Activated B cell treated with CpG ODN at 0.5 μM for 24 hours (primary cell): ENCODE measurements at regions of chr10 and their contacts with region 1.

Region 1: DNA sequence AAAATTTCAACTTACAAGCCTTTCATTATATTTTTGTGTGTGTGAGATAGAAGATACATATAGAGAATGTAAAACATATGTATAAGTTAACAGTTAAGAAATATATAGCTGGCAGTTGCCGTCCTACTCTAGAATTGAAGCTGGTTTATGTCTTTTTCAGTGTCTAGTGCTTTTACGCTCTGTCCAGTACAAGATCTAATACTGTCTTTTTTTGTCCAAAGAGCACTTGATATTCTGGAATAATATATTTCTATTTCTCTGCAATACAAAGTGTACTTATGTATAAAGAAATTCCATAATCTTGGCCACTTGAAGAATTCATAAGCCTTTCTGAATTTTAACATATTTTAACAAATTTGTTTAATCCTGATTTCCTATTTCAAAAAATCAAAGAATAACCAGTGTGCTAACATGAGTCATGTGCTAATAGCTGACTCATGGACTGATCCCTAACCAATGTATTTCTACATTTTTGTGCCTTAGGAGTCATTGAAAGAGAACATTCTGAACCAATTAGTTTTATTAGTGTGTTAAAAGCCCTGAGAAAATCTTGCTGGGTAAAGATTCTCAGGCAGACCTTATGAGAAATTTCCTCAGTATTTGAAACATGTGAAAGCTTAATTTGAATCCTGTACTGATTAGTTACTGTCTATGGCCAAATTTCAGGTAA is 73.2 kb upstream of the CCAR1 start:
- DNase-seq: no peak
- ATAC-seq: no peak
- H3K4me3 Mint-ChIP-seq: no peak overlapping the region
- H3K27ac Mint-ChIP-seq: no peak overlapping the region
- H3K4me1 Mint-ChIP-seq: no peaks in the 10 kb centered on the region
- H3K27me3 Mint-ChIP-seq: no peaks in the 10 kb centered on the region
- CTCF ChIP-seq: no peak

Region 2: DNA sequence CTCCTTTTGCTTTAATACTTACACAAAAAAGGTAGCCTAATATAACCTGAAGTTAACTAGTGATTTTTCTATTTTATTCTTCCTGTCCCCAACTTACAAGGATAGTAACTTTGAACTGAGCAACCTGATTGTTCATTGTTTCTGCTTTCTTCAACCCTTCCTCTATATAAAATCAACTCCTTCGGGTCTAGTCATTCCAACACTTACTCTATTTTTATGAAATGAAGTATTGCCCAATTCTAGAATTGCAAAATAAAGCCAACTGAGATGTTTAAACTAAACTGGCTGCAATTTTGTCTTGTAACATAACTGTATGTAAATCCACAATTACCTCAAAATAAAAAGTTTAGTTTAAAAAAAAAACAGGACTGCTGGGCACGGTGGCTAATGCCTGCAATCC is 155.7 kb before region 1 on chr10:
- CTCF ChIA-PET with region 1: no interaction called
- POLR2A ChIA-PET with region 1: interaction called, 11 read pairs
- intact Hi-C with region 1: no loop called
- DNase-seq: no peak
- ATAC-seq: no peak
- H3K4me3 Mint-ChIP-seq: no peak overlapping the region
- H3K27ac Mint-ChIP-seq: no peak overlapping the region
- H3K4me1 Mint-ChIP-seq: no peaks in the 10 kb centered on the region
- H3K27me3 Mint-ChIP-seq: no peaks in the 10 kb centered on the region
- CTCF ChIP-seq: no peak

Region 3: DNA sequence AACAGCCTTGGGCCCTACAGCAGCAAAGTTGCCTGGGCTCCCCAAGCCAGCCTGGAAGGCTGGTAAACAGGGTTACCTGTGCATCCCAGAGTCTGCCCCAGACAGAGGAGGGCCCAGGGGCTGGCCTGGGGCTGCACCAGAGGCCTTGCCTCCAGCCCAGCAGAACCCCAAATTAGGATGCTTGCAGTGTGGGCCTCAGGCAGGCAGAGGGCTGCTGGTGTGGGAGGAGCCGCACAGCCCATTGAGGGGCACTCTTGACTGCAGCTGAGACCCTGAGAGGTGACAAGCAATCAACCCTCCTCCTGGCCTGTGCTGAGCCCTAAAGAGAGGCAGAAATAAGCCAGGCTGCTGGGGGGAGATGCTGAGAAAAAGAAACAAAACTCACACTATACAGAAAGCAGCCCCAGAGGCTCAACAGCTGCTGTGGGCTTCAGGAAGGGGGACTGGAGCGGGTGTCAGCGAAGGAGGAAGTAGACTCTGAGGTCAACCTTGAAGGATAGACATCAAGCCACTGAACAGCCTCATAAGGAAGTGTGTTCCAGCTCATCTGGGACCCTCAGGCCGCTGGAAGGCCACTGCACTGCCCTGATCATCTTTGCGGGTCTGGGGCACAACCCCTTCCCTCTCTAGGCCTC is 1478.2 kb after region 1 on chr10:
- CTCF ChIA-PET with region 1: no interaction called
- POLR2A ChIA-PET with region 1: no interaction called
- intact Hi-C with region 1: no loop called
- DNase-seq: no peak
- ATAC-seq: no peak
- H3K4me3 Mint-ChIP-seq: no peak overlapping the region
- H3K27ac Mint-ChIP-seq: peak overlapping the region; percentile 46
- H3K4me1 Mint-ChIP-seq: peaks cover 8% of the 10 kb centered on the region
- H3K27me3 Mint-ChIP-seq: no peaks in the 10 kb centered on the region
- CTCF ChIP-seq: no peak